Activated CD4-positive, alpha-beta memory T cell treated with anti-CD3 and anti-CD28 coated beads for 36 hours (primary cell): ENCODE measurements at regions of chr22 and their contacts with region 1.

Region 1: DNA sequence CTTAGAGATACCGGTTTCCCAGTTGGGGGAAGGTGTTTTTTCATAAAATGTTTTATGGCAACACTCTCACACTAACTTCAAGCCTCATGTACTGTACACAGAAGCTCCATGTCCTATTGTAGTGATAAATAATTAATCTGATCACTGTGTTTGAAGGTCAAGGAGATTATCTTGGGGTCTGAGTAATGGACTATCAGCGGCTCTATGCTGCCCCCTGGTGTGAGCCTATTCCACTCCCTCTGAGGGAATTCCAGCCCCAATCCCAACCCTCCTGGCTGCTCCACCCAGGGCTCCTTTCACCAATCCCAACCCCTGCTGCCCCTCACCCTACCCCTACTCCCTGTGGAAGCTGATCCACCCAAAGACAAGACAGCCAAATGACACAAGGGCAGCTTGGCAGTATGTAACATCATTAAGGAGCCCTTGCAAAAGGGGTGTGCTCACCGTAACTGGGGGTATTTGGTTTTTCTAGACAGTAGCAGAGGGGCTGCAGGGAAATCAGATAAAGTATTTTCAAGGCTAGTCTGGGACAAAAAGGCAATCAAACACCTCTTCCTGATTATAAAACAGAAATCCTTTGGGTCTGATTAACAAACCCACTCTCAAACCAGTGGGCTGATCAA is 22.3 kb downstream of the HPS4 start:
- DNase-seq: peak; percentile 42
- H3K4me3 Mint-ChIP-seq: no peak overlapping the region
- H3K27ac Mint-ChIP-seq: no peak overlapping the region
- H3K4me1 Mint-ChIP-seq: no peaks in the 10 kb centered on the region
- H3K27me3 Mint-ChIP-seq: no peaks in the 10 kb centered on the region

Region 2: GRCh38 chr22:26364066-26365015 is 97.0 kb before region 1 on chr22:
- CTCF ChIA-PET with region 1: interaction called, 70 read pairs
- POLR2A ChIA-PET with region 1: no interaction called
- intact Hi-C with region 1: no loop called
- DNase-seq: peak; percentile 57
- H3K4me3 Mint-ChIP-seq: no peak overlapping the region
- H3K27ac Mint-ChIP-seq: no peak overlapping the region
- H3K4me1 Mint-ChIP-seq: peaks cover 3% of the 10 kb centered on the region
- H3K27me3 Mint-ChIP-seq: peaks cover 14% of the 10 kb centered on the region

Region 3: DNA sequence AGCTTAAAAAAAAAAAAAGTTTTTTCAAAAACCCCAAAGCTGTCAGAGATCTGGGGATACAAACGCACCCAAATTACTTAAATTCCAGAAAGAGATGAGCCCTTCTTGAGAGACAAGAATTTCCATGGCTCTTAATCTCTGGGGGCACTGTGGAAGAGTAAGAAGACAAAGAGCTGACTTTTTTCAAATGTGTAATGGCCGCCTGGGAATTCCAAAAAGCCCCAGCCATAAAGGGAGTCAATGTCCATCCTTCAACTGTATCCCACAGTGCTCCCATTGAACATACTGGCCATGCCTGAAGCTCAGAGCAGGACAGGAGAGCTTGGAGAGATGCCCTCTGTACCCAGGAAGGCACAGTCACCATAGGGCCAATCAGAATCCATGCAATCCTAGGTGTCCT is 69.7 kb before region 1 on chr22:
- CTCF ChIA-PET with region 1: interaction called, 30 read pairs
- POLR2A ChIA-PET with region 1: no interaction called
- intact Hi-C with region 1: no loop called
- DNase-seq: no peak
- H3K4me3 Mint-ChIP-seq: no peak overlapping the region
- H3K27ac Mint-ChIP-seq: no peak overlapping the region
- H3K4me1 Mint-ChIP-seq: no peaks in the 10 kb centered on the region
- H3K27me3 Mint-ChIP-seq: peaks cover 9% of the 10 kb centered on the region

Region 4: DNA sequence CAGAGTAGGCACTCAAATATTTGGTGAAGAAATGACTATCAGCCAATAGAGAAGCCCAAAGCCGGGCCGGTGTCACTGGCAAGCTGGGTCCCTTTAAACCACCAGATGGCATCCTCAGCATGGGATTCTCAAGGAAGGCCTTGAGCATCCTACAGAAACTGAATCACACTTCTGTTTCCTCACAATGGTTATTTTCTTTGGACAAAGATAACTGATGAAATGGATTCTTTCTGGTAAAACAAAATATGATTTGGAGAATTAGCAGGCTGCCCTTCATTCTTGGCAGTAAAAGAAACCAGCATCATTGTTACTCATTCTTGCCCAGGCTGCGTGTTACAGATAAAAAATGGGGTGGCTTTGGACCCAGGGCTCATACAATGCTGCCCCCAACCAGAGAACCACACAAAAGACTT is 62.6 kb before region 1 on chr22:
- CTCF ChIA-PET with region 1: interaction called, 109 read pairs
- POLR2A ChIA-PET with region 1: no interaction called
- intact Hi-C with region 1: loop called (anchors 1 kb)
- DNase-seq: peak; percentile 77
- H3K4me3 Mint-ChIP-seq: no peak overlapping the region
- H3K27ac Mint-ChIP-seq: no peak overlapping the region
- H3K4me1 Mint-ChIP-seq: peaks cover 5% of the 10 kb centered on the region
- H3K27me3 Mint-ChIP-seq: no peaks in the 10 kb centered on the region

Region 5: DNA sequence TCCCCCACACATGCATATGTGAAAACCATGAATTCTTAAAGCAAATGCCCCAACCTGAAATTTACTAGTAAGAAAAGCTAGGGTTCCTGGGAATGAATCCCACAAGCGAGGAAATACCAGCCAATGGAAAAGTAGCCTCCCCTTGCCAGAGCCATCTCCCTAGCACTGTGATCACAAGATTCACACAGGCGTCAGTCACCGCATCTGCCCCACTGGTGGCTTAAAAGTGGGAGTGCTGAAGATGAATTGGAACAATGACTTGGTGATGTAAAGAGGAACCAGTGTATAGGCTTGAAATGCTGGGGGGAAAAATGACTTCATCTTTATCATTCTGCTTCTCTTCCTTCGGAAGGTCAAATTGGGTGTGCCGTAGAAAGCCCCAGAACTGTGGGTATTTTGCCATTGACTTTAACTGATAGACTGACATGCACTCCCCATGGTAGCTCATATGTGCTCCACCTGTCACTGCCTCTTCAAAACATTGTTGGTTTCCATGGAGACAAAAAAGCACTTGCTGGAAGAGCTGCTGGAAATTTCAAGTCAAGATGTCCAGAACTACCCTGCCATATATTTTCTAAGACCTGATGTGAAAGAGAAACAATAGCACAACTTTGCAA is 51.5 kb before region 1 on chr22:
- CTCF ChIA-PET with region 1: interaction called, 11 read pairs
- POLR2A ChIA-PET with region 1: no interaction called
- intact Hi-C with region 1: no loop called
- DNase-seq: no peak
- H3K4me3 Mint-ChIP-seq: no peak overlapping the region
- H3K27ac Mint-ChIP-seq: no peak overlapping the region
- H3K4me1 Mint-ChIP-seq: peaks cover 3% of the 10 kb centered on the region
- H3K27me3 Mint-ChIP-seq: peaks cover 8% of the 10 kb centered on the region

Region 6: DNA sequence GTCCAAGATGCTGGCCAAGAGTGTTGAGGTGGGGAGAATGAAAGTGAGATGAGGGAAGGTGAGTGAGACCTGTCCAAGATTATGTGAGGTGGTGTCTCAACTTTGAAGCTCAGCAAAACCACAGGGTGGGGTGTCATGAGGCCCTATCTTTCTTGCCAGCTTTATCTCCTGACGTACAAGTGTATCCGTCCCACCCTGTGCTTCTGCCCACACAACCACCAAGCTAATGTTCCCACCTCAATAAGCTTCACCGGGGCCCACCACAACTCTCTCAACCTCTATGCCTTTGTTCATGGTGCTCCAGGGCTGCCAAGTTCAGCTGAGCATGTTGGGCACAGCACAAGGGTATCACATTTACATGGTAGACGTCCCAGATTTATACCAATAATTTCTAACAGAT is 135.7 kb after region 1 on chr22:
- CTCF ChIA-PET with region 1: no interaction called
- POLR2A ChIA-PET with region 1: no interaction called
- intact Hi-C with region 1: no loop called
- DNase-seq: no peak
- H3K4me3 Mint-ChIP-seq: no peak overlapping the region
- H3K27ac Mint-ChIP-seq: no peak overlapping the region
- H3K4me1 Mint-ChIP-seq: peaks cover 22% of the 10 kb centered on the region
- H3K27me3 Mint-ChIP-seq: no peaks in the 10 kb centered on the region